WTC11 (cell line): ENCODE measurements at regions of chr18 and their contacts with region 1.

Region 1: GRCh38 chr18:9516437-9517064 is 41.2 kb downstream of the RALBP1 start:
- DNase-seq: no peak
- ATAC-seq: peak; percentile 30; the same call in 1 of the 2 replicates
- H3K4me3 Mint-ChIP-seq: no peak overlapping the region
- H3K27ac Mint-ChIP-seq: 0 out of 2 replicates have a peak overlapping the region, but pooled peaks have one; percentile 53
- H3K4me1 Mint-ChIP-seq: peaks cover 10% of the 10 kb centered on the region
- H3K27me3 Mint-ChIP-seq: no peaks in the 10 kb centered on the region
- CTCF ChIP-seq: peak; percentile 75

Region 2: DNA sequence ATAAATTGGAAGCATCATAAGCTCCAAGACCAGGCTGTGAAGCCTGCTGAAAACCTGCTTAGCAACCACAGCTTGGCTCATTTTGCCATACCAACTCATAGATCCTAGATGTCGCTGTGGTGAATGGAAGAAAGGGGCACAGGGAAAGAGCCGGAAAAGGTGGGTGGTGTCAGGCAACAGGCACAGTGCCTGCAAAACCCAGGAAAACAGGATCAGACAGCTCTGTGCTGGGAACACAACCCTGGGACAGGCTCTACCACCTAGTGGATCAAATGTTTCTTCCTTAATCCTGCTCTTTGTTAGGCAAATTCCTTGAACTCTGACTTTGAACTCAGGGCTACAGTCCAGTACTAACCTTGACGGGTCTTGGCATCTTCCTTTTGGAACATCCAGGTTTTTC is 150.4 kb before region 1 on chr18:
- CTCF ChIA-PET with region 1: interaction called, 20 read pairs
- POLR2A ChIA-PET with region 1: no interaction called
- DNase-seq: peak; percentile 69
- ATAC-seq: peak; percentile 100
- H3K4me3 Mint-ChIP-seq: no peak overlapping the region
- H3K27ac Mint-ChIP-seq: peak overlapping the region; percentile 47
- H3K4me1 Mint-ChIP-seq: peaks cover 13% of the 10 kb centered on the region
- H3K27me3 Mint-ChIP-seq: no peaks in the 10 kb centered on the region
- CTCF ChIP-seq: no peak

Region 3: DNA sequence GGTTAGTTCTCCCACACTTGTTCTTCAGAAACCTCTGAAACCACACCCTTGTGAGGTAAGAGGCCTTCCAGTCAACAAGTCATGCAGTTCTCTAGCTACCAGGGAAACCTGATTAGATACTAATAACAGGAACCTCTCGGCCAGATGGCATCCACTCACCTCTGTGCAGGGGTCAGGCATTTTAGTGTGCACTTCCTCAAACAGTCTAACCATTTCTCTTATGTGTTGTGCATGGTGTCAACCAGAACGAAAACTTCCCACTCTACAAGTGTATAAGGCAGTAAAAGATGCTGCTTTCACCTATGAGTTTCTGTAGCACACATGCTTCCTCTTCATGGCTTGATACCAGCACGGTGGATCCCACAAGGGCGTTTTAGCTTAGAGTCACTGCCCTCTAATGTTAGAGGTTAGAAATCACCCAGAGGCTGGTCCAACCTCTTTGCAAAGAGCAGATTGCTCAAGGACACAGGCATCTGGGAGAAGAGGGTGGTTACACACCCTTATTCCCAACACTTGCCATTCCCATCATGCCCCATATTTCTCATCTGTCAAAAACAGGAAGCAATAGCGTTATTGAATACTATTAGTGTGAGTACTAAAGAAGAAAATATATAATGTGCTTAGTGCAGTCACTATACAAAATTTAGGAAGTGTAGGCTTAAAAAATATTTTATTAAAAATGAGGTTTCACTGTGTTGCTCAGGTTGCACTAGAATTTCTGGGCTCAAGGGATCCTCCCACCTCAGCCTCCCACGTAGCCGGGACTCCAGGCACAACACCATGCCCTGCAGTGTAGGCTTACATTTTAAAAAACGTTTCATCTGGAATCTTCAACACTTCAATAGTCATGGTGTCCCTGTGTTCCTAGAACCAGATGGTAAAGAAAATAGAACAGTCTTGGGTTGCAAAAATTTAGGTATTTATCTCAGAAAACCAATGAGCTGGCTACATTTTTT is 157.0 kb after region 1 on chr18:
- CTCF ChIA-PET with region 1: no interaction called
- POLR2A ChIA-PET with region 1: no interaction called
- DNase-seq: no peak
- ATAC-seq: peak; percentile 84
- H3K4me3 Mint-ChIP-seq: no peak overlapping the region
- H3K27ac Mint-ChIP-seq: peak overlapping the region; percentile 72; the same call in 1 of the 2 replicates
- H3K4me1 Mint-ChIP-seq: no peaks in the 10 kb centered on the region
- H3K27me3 Mint-ChIP-seq: no peaks in the 10 kb centered on the region
- CTCF ChIP-seq: no peak